Heart right ventricle (tissue), 16 donors: ENCODE measurements at regions of chr1 and their contacts with region 1.

Region 1: DNA sequence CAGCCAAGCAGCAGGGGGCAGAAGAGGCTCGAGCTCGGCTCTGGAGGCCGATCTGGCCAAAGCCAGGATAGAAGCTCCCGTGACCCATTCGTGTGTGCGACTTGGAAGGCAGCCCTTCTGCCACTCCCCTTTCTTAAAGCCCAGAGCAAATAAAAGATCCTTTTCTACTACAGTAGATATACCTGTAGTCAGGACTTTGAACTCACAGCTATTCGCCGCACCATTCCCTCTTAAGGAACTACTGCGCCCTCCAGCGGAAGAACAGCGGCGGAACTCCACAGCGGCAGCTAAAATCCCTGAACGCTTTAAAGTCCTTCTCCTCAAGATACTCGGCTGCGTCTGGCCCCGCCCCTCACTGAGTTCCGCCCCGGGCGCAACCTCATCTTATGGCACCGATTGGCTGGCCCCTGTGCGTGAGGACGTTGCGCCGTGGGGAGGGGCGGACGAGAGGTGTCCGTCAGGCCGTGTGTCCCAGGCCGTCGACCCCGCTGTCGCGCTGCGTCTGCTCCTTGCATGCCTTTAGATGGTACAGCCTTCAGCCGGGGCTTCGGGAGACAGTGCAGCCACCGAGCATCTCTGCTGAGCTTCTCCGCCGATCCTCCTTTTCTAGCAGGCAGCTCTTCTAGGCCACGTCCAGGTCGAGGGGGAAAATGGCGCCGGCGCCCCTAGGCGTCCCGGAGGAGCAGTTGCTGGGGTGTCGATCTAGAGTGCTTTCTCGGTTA is at the start of gene LRIG2:
- DNase-seq: peak; percentile 98
- ATAC-seq: peak; percentile 99 to 100 (median 100)
- H3K4me3 ChIP-seq: peak within 1 kb of the TSS; percentile 64 to 94 (median 78)
- H3K27ac ChIP-seq: peak within 1 kb of the TSS; percentile 77 to 94 (median 92)
- H3K4me1 ChIP-seq: peaks cover 0 to 47% (median 34%) of the 10 kb centered on the region in 9 donors
- H3K27me3 ChIP-seq: no peaks in the 10 kb centered on the region
- CTCF ChIP-seq: peak; percentile 79 to 95 (median 88)
- total RNA-seq, gene LRIG2: 7.8 to 11.3 (median 8.5) TPM

Region 2: DNA sequence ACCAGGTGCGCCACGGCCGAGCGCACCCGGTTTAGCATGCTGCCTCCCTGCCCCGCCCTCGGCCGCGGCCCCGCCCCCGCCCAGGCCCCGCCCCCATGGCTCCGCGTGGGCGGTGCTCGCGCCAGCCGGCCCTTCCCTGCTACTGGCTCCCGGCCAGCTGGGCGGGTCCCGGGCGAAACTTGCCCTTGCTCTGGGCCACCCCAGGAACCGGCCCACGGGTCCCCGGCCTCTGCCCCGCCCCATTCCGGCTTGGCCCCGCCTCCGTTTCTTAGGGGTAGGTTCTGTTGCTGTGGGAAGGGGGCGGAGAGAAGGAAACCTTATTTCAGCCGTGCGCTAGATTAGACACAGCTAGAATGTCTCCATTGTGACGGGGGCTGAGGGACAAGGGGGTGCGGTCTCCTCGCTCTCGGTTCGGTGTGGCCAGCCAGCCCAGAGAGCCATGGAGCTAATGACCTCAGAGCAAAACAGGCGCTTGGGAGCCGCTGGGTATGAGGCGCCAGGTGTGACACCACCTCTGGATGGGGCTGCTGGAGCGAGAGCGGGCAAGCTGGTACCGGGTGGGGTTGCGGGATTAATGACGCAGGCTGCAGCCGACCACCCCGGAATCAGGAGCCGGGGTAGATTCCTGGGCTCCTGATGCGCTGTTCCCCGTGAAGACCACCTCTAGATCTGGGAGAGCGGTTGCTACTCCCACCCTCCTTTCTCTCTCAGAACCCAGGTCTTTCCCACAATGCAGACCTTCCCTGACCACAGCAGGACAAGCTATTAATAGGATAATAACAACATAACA is 357.5 kb before region 1 on chr1 and contains the start of gene PPM1J:
- intact Hi-C with region 1: loop called in 7 of 10 experiments (anchors 2 to 10 kb)
- DNase-seq: peak; percentile 98 to 99
- ATAC-seq: peak; percentile 87 to 96 (median 91)
- H3K4me3 ChIP-seq: peak within 1 kb of the TSS; percentile 55 to 81 (median 71)
- H3K27ac ChIP-seq: peak within 1 kb of the TSS in 9 of 10 donors; percentile 67 to 88 (median 78)
- H3K4me1 ChIP-seq: peaks cover 2 to 35% (median 23%) of the 10 kb centered on the region in 9 donors
- H3K27me3 ChIP-seq: peaks cover 0 to 30% (median 12%) of the 10 kb centered on the region in 7 donors
- CTCF ChIP-seq: peak in 1 of 9 donors; percentile 2
- total RNA-seq, gene PPM1J: 5.8 to 11.0 (median 8.5) TPM

Region 3: DNA sequence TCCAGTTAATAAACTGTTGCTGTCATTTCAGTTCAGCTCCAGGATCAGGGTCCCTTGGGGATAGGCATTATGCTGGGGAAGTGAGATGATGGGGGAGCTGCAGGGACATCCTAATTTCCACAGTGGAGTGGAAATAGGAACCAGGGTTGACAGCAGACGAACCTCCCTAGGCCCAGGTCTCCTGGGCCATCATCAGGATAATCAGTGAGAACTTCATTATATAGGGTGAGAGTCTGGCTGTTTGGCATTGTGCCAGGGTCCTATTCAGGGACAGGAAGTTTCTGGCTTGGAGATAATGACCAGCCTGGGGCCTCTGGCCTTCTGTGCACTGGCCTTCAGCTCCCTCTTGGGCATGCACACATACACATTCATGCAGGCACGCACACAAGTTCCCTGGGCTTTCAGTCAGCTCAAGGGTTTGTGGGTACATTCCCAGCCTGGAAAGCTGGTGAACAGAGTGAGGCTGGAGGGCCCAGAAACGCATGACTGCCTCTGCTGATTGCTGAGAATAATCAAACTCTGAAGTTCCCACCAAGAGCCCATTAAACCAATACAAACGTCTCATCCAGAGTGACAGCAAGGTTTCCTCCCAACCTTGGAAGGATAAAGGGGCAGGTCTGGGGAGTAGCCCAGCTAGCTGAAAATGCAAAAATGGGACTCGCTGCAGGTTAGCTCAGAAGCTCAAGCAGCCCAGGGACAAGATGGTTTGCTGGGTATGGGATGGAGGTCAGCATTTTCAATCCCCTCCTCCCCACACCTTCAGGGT is 13.8 kb before region 1 on chr1:
- intact Hi-C with region 1: loop called in 1 of 10 experiments (anchors 1 kb)
- DNase-seq: no peak
- ATAC-seq: peak in 7 of 8 donors; percentile 7 to 73 (median 39)
- H3K4me3 ChIP-seq: no peak overlapping the region
- H3K27ac ChIP-seq: peak overlapping the region in 2 of 10 donors; percentile 19 to 31
- H3K4me1 ChIP-seq: peaks cover 0 to 25% (median 11%) of the 10 kb centered on the region in 9 donors
- H3K27me3 ChIP-seq: no peaks in the 10 kb centered on the region
- CTCF ChIP-seq: no peak

Region 4: GRCh38 chr1:113133038-113133437 is 60.1 kb after region 1 on chr1:
- intact Hi-C with region 1: no loop called
- DNase-seq: no peak
- ATAC-seq: no peak
- H3K4me3 ChIP-seq: no peak overlapping the region
- H3K27ac ChIP-seq: no peak overlapping the region
- H3K4me1 ChIP-seq: peaks cover 0 to 8% (median 0%) of the 10 kb centered on the region in 9 donors
- H3K27me3 ChIP-seq: no peaks in the 10 kb centered on the region
- CTCF ChIP-seq: no peak